ENCODE measurements at regions of chr16 and their contacts with region 1.

Region 1: DNA sequence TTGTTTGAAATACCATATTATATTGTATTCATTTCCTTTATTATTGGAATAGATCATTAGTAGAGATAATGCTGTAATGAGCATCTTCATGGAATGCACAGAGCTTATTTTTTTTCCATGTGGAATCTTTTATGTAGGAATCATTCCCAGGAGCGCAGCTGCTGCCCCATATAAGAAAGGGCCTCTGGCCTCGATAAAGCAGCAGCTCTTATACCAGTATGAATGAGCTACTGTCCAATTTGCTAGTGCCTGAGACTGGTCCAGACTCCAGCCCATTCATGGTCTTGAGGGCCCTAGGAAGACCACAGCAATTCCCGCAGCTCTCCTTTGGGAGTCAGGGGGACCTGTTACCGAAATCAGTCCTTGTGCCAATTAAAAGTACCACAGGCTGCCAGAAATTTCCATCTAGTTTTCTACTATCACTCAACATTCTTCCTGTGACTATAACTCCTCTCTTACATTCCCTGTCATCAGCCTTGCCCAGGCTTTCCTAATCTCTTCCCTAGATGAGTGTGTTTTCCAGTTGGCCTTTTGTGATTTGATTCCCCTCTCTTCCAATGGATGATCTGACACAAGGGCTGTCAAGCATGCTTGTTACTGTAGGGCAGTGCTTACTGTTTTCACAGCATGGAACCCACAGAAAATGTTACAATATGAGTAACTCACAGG is 1.9 kb downstream of the ZNF843 start:
- DNase-seq: no peak
- H3K4me3 ChIP-seq: no peak overlapping the region
- H3K27ac ChIP-seq: no peak overlapping the region
- H3K4me1 ChIP-seq: peaks cover 7 to 17% (median 13%) of the 10 kb centered on the region in 4 donors
- H3K27me3 ChIP-seq: no peaks in the 10 kb centered on the region
- CTCF ChIP-seq: no peak
- EP300 ChIP-seq: no peak
- POLR2A ChIP-seq: no peak

Region 2: DNA sequence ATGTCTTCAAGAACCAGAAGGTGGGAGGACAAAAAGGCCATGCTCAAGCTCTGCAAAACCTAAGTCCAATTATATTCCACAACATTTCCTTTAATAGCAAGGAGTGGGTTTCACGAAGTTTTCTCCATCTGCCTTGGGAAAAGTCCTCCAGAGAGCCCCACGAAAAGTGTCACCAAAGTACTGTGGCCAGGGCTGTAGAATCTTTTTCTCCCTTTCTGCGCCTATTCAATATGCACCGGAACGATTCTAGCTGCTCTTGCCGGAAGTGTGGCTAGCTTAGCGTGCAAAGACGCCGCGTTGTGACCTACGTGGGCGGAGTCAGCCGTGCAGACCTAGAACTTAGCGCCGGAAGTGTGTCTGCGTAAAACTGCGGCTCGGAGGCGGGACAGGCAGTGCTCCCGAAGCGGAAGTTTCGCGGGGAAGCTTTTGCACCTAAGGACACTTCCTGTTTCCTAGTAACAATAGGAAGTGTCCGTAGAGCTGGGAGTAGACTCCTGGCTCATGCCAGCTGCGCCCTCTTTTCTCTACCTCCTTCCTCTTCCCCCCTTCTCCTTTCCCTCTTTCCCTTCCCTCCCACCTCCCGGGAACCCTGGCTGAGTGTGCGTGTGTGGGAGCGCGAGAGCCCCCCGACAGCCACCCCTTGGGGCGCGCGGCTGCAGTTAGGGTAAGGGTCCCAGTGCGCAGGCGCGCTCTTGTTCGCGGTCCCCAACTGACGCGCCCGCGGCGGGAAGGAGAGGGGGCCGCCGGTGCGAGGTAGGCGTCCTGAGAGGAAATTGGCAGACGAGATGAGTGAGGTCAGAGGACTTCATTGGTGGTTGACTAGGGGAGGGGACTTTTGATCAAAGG is 366.5 kb before region 1 on chr16 and contains the starts of genes ZNF646 and ZNF668:
- intact Hi-C with region 1: loop called (anchors 10 kb)
- DNase-seq: peak; percentile 99
- H3K4me3 ChIP-seq: peak within 1 kb of the TSS; percentile 81 to 100 (median 98)
- H3K27ac ChIP-seq: peak within 1 kb of the TSS; percentile 92 to 99 (median 99)
- H3K4me1 ChIP-seq: peaks cover 19 to 49% (median 39%) of the 10 kb centered on the region in 4 donors
- H3K27me3 ChIP-seq: no peaks in the 10 kb centered on the region
- CTCF ChIP-seq: no peak
- EP300 ChIP-seq: no peak
- POLR2A ChIP-seq: peak; percentile 47
- total RNA-seq, gene ZNF646: 11.6 to 17.6 (median 15.5) TPM
- total RNA-seq, gene ZNF668: 9.6 to 19.3 (median 10.6) TPM

Region 3: DNA sequence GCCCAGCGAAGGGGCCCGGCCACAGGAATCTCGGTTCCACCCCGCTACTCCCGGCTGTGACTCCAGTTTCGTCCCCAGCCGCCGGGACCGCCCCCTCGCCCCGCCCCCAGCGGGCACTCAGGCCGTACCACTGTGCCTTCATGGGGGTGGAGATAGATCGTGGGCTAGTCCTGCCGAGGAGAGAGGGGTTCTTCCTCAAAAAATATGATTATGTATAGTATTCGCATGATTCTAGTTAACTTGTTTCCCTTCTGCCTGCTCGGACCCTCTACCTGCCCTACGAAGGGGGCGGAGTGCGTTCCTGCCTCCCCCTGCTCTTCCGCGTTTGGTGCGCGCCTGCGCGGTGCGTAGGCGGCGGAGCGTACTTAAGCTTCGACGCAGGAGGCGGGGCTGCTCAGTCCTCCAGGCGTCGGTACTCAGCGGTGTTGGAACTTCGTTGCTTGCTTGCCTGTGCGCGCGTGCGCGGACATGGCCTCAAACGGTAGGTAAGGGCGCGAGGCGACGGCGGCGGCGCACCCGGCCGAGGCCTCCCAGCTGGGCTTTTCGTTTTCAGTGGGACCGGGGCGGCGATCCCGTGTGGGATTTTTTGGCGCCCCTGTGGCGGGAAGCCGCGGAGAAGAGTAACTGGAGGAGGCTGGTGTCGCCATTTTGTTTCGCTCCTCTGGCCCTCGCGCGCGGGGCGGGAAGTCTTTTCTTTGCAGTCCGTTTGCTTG is 260.7 kb before region 1 on chr16 and contains the start of gene FUS:
- intact Hi-C with region 1: loop called (anchors 5 kb)
- DNase-seq: peak; percentile 98
- H3K4me3 ChIP-seq: peak within 1 kb of the TSS; percentile 80 to 99 (median 88)
- H3K27ac ChIP-seq: peak within 1 kb of the TSS; percentile 95 to 99 (median 96)
- H3K4me1 ChIP-seq: peaks cover 29 to 48% (median 42%) of the 10 kb centered on the region in 4 donors
- H3K27me3 ChIP-seq: no peaks in the 10 kb centered on the region
- CTCF ChIP-seq: no peak
- EP300 ChIP-seq: no peak
- POLR2A ChIP-seq: peak; percentile 99
- total RNA-seq, gene FUS: 24.0 to 45.1 (median 34.2) TPM

Measured in esophagus muscularis mucosa (tissue), 4 donors.